Endothelial cell of umbilical vein (primary cell): ENCODE measurements at regions of chr14 and their contacts with region 1.

Region 1: DNA sequence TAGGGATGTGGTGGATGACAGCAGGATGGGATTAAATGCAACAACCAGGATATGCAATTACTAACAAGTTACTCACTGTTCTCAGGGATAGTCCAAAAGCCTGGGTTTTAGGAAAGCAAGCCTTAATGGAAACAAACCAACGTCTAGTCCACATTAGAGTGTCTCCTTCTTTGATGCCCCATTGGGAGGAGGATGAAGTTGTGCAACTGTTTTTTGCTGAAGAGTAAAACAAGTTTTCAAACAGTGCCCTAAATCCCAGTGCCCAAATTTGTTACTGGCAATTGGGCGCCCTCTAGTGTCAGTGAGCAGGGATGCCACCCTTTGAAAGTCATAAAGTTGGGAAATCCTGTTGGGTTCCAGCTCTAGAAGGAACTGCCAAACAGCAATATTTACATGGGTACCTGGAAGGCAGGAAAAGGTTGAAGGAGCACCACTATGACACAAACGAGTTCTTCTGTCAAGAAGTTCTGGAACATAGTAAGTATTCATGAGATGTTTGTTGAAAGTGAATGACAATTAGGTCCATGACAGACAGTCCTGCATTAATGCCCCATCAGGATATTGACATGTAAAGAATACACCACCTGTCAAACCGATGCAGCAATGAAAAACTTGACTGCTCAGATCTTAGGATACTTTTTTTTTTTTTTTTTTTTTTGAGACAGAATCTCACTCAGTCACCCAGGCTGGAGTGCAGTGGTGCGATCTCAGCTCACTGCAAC is 11.1 kb upstream of the DPF3 start:
- DNase-seq: peak; percentile 68
- H3K4me3 ChIP-seq: no peak overlapping the region
- H3K27ac ChIP-seq: no peak overlapping the region
- H3K4me1 ChIP-seq: no peaks in the 10 kb centered on the region
- H3K27me3 ChIP-seq: no peaks in the 10 kb centered on the region
- CTCF ChIP-seq: peak; percentile 78 to 93
- POLR2A ChIP-seq: no peak

Region 2: DNA sequence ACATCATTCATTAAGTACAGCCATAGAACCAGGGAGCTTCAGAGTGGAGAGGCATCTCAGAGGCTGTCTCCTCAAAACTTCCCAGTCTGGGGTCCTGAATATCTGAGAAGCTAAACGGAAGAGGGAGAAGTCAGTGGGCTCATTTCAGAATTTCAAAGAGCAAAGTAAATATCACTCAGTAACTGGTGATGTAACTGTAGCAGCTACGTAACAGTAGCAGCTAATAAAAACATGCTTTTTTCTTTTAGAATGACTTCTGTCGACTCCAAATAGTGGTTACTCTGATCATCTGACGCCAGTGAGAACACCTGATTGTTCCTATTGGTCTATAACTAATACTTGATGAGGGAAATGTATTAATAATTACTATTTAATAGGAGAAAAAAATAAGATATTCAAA is 394.4 kb before region 1 on chr14:
- CTCF ChIA-PET with region 1: interaction called, 377 read pairs
- POLR2A ChIA-PET with region 1: no interaction called
- dilution Hi-C with region 1: no loop called
- intact Hi-C with region 1: no loop called
- DNase-seq: no peak
- H3K4me3 ChIP-seq: no peak overlapping the region
- H3K27ac ChIP-seq: no peak overlapping the region
- H3K4me1 ChIP-seq: no peaks in the 10 kb centered on the region
- H3K27me3 ChIP-seq: peaks cover 13 to 22% of the 10 kb centered on the region in 2 experiments
- CTCF ChIP-seq: no peak
- POLR2A ChIP-seq: no peak

Region 3: DNA sequence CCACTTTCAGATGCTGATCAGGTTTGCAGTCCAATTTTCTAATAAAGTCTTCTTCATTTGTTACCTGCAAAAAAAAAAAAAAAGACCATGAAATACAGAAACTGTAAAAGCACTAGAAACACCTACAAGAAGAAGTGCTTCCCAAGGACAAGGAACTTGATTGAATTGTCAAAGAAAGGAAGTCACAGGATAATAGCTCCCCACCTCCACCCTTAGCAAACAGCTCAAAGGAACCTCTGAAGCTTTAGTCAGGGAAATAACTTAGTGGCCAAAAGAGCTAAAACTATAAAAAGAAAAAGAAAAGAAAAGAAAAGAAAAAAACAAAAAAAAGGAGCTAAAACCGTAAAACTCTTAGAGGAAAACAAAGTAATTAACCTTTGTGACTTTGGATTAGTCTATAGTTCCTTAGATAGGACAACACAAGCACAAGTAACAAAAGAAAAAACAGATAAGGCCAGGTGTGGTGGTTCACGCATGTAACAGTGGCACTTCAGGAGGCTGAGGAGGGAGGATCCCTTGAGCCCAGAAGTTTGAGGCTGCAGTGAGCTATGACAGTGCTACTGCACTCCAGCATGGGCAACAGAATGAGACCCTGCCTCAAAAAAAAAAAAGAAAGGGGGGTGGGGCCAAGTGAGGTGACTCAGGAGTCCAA is 93.4 kb after region 1 on chr14:
- CTCF ChIA-PET with region 1: no interaction called
- POLR2A ChIA-PET with region 1: no interaction called
- dilution Hi-C with region 1: no loop called
- intact Hi-C with region 1: no loop called
- DNase-seq: no peak
- H3K4me3 ChIP-seq: no peak overlapping the region
- H3K27ac ChIP-seq: no peak overlapping the region
- H3K4me1 ChIP-seq: no peaks in the 10 kb centered on the region
- H3K27me3 ChIP-seq: no peaks in the 10 kb centered on the region
- CTCF ChIP-seq: no peak
- POLR2A ChIP-seq: no peak